IMR-90 (cell line): ENCODE measurements at regions of chr9 and their contacts with region 1.

Region 1: GRCh38 chr9:105141146-105141975 is 103.1 kb upstream of the SLC44A1 start:
- DNase-seq: no peak
- ATAC-seq: peak; percentile 28
- H3K4me3 ChIP-seq: no peak overlapping the region
- H3K27ac ChIP-seq: no peak overlapping the region
- H3K4me1 ChIP-seq: no peaks in the 10 kb centered on the region; the same call in 1 of the 2 replicates
- H3K27me3 ChIP-seq: 0 out of 2 replicates have a peak, but pooled peaks cover 2% of the 10 kb centered on the region
- CTCF ChIP-seq: no peak
- POLR2A ChIP-seq: no peak
- RAD21 ChIP-seq: no peak

Region 2: DNA sequence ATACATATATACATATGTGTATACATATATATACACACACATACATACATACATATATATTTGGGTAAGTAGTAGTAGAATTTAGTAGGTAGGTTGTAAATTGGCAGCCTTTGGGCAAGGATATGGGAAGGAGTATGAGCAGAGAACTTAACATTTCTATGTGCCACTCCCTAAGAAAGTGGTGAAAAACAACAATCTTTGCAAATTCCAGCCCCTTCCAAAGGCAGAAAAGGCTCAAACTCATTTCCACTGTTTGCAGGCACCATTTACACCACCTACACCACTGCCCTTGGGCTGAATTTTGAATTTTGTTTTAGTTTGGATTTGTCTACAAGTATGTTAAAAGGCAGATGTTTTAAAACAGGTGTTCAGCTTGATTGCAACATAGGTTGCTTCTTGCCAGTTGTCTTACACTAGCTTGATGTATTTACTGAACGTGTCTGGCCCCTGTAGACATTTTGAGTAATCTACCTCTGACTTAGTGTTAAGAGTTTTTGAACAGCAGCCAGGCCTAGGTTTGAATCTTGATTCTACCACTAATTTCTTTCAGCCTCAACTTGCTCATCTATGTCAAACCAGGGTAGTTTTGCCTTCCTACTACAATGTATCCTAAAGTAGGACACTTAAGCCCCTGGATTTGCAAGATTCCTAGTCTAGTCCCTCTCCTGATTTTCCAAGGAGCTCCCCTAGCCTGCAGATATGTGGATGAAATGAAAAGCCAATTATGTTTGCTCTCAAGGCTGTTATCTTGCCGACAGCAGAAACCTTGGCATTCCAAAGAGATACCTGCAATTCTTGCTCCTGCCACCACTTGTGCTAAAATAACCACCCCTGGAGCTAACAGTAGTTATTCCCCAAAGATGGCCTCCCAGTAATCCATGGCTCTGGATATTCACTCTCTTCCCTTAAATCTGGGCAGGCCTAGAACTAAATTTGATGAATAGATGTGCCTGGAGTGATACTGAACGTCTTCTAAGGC is 53.2 kb before region 1 on chr9:
- CTCF ChIA-PET with region 1: no interaction called
- POLR2A ChIA-PET with region 1: no interaction called
- dilution Hi-C with region 1: no loop called
- in situ Hi-C with region 1: loop called (anchors 10 kb)
- intact Hi-C with region 1: no loop called
- DNase-seq: no peak
- ATAC-seq: no peak
- H3K4me3 ChIP-seq: no peak overlapping the region
- H3K27ac ChIP-seq: no peak overlapping the region
- H3K4me1 ChIP-seq: no peaks in the 10 kb centered on the region
- H3K27me3 ChIP-seq: no peaks in the 10 kb centered on the region
- CTCF ChIP-seq: no peak
- POLR2A ChIP-seq: no peak
- RAD21 ChIP-seq: no peak